CD4-positive, alpha-beta memory T cell (primary cell): ENCODE measurements at regions of chr4 and their contacts with region 1.

Region 1: DNA sequence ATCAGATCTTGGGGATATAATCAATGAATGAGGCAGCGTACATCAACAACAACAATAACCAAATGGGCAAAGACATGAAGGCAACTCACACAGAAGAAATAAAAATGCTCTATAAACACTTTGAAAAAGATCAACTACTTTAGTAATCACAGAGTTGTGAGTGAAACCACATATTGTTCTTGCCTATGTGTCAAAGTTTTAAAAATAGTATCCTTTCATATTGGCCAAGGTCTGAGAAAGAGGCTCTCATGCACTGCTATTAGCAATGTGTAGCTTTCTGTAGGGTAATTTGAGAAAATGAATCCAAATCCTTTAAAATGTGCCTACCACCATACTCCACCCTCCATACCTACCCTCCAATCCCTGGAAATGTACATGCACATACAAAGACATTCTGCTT is 25.0 kb downstream of the COQ2 start:
- DNase-seq: no peak
- H3K4me3 ChIP-seq: no peak overlapping the region
- H3K4me3 Mint-ChIP-seq: no peak overlapping the region
- H3K27ac ChIP-seq: no peak overlapping the region
- H3K27ac Mint-ChIP-seq: no peak overlapping the region
- H3K4me1 ChIP-seq: peaks cover 6% of the 10 kb centered on the region
- H3K4me1 Mint-ChIP-seq: peaks cover 0 to 5% (median 3%) of the 10 kb centered on the region in 4 donors
- H3K27me3 ChIP-seq: no peaks in the 10 kb centered on the region
- H3K27me3 Mint-ChIP-seq: no peaks in the 10 kb centered on the region

Region 2: GRCh38 chr4:83028976-83029375 is 230.6 kb before region 1 on chr4:
- CTCF ChIA-PET with region 1: no interaction called
- POLR2A ChIA-PET with region 1: no interaction called
- intact Hi-C with region 1: no loop called
- DNase-seq: no peak
- H3K4me3 ChIP-seq: no peak overlapping the region
- H3K4me3 Mint-ChIP-seq: no peak overlapping the region
- H3K27ac ChIP-seq: no peak overlapping the region
- H3K27ac Mint-ChIP-seq: no peak overlapping the region
- H3K4me1 ChIP-seq: no peaks in the 10 kb centered on the region
- H3K4me1 Mint-ChIP-seq: no peaks in the 10 kb centered on the region
- H3K27me3 ChIP-seq: no peaks in the 10 kb centered on the region
- H3K27me3 Mint-ChIP-seq: peaks cover 2 to 11% of the 10 kb centered on the region in 2 donors

Region 3: GRCh38 chr4:83067058-83067639 is 192.4 kb before region 1 on chr4:
- CTCF ChIA-PET with region 1: interaction called, 123 read pairs
- POLR2A ChIA-PET with region 1: no interaction called
- intact Hi-C with region 1: no loop called
- DNase-seq: no peak
- H3K4me3 ChIP-seq: no peak overlapping the region
- H3K4me3 Mint-ChIP-seq: no peak overlapping the region
- H3K27ac ChIP-seq: no peak overlapping the region
- H3K27ac Mint-ChIP-seq: no peak overlapping the region
- H3K4me1 ChIP-seq: no peaks in the 10 kb centered on the region
- H3K4me1 Mint-ChIP-seq: peaks cover 0 to 2% (median 0%) of the 10 kb centered on the region in 4 donors
- H3K27me3 ChIP-seq: no peaks in the 10 kb centered on the region
- H3K27me3 Mint-ChIP-seq: no peaks in the 10 kb centered on the region

Region 4: DNA sequence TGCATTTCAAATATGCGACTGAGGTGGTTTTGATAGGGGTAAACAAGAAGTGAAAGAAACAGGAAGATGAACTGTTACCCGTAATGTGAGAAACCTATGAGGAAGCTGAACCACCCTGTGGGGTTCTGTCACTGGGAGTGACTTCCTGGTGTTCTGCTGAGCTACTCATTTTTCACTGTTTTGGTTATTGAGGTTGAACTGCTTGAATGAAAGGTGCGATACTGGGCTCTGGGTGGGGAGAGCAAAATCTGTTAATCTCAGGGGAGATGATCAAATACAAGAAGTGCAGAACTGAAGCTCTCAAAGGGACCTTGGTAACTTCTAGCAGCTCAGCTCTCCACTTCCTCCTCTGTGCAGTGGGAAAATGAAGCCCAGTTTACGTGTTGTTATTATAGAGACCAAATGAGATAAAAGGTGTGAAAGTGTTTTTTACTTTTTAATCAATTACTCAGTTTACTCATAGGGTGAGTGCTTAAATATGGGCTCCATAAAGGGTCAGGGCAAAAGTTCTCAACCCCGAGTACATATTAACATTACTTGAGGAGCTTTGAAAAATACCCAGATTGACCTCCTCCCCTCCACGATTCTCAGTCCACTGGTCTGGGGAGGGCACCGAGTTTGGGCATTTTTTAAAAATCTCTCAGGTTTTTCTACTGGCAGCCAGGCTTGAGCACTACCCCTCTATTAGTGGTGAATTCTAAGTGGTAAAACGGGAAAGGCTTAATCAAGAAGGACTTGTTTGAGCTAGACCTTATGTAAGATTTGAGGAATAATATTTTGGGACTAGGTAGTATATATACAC is 41.7 kb before region 1 on chr4:
- CTCF ChIA-PET with region 1: interaction called, 38 read pairs
- POLR2A ChIA-PET with region 1: interaction called, 7 read pairs
- intact Hi-C with region 1: no loop called
- DNase-seq: peak; percentile 82 to 91 (median 86)
- H3K4me3 ChIP-seq: peak overlapping the region in 1 of 2 donors; percentile 9
- H3K4me3 Mint-ChIP-seq: peak overlapping the region; percentile 55 to 77 (median 70)
- H3K27ac ChIP-seq: peak overlapping the region; percentile 64
- H3K27ac Mint-ChIP-seq: peak overlapping the region; percentile 77 to 94 (median 91)
- H3K4me1 ChIP-seq: peaks cover 85% of the 10 kb centered on the region
- H3K4me1 Mint-ChIP-seq: peaks cover 58 to 85% (median 71%) of the 10 kb centered on the region in 4 donors
- H3K27me3 ChIP-seq: no peaks in the 10 kb centered on the region
- H3K27me3 Mint-ChIP-seq: no peaks in the 10 kb centered on the region